ENCODE measurements at regions of chr14 and their contacts with region 1.

Region 1: DNA sequence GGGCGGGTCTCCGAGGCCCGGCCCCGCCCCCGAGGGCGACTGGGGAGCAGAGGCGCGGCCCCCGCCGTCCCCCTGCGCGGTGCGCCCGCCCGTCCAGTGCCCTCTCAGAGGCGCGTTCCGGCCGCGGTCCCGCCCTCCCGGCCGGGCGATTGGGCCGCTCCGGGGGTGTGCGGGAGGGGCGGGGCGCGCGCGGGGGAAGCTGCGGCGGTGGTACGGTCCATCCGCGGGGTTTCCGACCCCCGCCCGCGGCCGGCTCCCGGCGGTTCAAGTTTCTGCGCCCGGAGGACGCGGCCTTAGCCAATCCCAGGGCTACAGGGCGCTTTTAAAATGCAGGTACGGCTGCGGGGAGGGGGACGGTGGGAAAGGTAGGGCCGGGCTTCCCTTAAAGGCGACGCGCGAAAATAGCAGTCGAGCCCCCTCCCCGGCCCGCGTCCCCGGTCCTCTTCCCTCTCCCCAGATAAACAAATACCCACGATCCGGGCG is 317 bp upstream of the CCDC85C start:
- DNase-seq: peak; percentile 91 to 95
- ATAC-seq: peak; percentile 75 to 88
- H3K4me3 ChIP-seq: peak overlapping the region; percentile 81
- H3K27ac ChIP-seq: peak overlapping the region; percentile 87 to 99
- H3K4me1 ChIP-seq: peaks cover 47% of the 10 kb centered on the region
- CTCF ChIP-seq: no peak
- EP300 ChIP-seq: no peak
- POLR2A ChIP-seq: no peak
- RAD21 ChIP-seq: no peak

Region 2: GRCh38 chr14:99497894-99498293 is 106.4 kb before region 1 on chr14:
- CTCF ChIA-PET with region 1: no interaction called
- POLR2A ChIA-PET with region 1: no interaction called
- DNase-seq: no peak
- ATAC-seq: no peak
- H3K4me3 ChIP-seq: no peak overlapping the region
- H3K27ac ChIP-seq: no peak overlapping the region
- H3K4me1 ChIP-seq: no peaks in the 10 kb centered on the region
- CTCF ChIP-seq: no peak
- EP300 ChIP-seq: no peak
- POLR2A ChIP-seq: no peak
- RAD21 ChIP-seq: no peak

Region 3: DNA sequence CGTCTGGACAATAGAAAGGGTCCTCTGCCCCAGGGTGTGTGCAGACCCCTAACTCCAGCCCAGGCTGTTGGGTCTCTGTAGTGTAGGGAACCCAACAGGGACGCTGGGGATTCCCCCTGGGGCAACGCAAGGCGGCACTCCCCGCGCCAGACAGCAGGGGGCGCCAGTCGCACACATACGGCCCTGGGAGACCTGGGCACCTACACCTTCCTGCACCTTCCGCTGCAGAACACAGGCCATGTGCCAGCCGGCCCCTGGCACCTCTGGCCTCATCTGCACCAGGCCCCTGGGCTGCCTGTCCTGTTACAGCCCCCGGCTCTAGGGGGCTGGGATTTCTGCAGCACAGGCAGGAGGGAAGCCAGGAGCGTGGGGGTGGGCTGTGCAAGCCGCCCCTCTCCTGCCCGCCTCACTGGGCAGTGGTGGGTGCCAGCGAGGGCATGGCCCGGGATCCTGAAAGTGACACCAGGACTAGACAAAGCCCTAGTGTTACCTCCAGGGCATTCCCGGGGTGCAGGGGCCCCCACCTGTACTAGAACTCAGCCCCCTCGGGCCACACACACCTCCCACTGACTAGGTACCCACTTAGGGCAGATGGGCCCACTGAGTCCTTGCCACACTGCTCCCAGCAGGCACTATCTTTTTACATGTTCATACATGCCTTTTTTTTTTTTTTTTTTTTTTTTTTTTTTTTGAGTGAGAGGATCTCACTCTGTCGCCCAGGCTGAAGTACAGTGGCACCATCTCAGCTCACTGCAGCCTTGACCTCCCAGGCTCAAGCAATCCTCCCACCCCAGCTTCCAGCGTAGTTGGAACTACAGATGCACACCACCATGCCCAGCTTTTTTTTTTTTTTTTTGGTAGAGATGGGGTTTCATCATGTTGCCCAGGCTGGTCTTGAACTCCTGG is 85.6 kb before region 1 on chr14:
- CTCF ChIA-PET with region 1: interaction called, 75 read pairs
- POLR2A ChIA-PET with region 1: interaction called, 3 read pairs
- DNase-seq: peak; percentile 70 to 81
- ATAC-seq: peak; percentile 51 to 70; a peak in 5 of 6 replicates
- H3K4me3 ChIP-seq: no peak overlapping the region
- H3K27ac ChIP-seq: peak overlapping the region; percentile 16 to 58; a peak in 4 of 6 replicates
- H3K4me1 ChIP-seq: peaks cover 25% of the 10 kb centered on the region
- CTCF ChIP-seq: peak; percentile 91
- EP300 ChIP-seq: no peak
- POLR2A ChIP-seq: no peak
- RAD21 ChIP-seq: peak; percentile 96

Region 4: DNA sequence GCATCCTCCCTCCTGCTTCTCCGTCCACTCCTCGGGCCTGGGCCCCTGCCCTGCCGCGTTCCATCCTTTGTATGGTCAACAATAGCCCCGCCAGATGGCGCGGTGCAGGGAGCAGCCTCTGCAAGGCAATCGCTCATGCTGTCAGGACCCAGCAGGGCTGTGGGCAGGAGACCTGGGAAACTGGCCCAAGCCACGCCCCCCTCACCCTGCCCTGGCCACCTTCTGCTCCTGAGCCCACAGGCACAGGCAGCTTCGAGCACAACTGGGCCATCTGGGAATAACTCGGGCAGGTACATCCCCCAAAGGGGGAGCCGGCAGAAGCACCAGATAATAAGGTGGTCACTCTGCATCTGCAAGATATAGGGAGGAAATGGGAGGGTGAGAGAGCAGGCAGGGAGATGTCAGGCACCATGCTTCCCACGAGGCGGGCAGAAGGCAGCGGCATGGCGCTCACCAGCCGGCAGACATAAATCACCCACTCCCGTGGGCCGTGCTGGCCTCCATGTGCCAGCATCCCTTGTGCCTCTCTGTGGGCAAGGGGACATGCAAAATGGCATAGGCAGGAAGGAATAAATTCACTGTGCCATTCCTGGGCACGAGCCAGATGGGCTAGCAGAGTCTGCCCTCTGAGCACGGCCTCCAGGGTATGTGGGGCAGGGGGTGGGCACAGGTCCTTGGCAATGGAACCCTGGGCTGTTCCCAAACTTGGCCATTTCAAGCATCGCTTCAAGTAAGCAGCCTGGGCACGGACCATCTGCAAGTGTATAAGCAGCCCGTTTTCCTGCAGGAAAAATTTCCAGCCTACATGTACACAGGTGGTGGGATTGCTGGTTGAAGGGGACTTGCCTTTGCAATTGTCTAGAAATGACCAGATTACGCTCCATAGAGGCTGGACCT is 40.8 kb before region 1 on chr14:
- CTCF ChIA-PET with region 1: interaction called, 96 read pairs
- POLR2A ChIA-PET with region 1: no interaction called
- DNase-seq: peak; percentile 76 to 86
- ATAC-seq: peak; percentile 93 to 98
- H3K4me3 ChIP-seq: no peak overlapping the region
- H3K27ac ChIP-seq: peak overlapping the region; percentile 37 to 92; a peak in 4 of 6 replicates
- H3K4me1 ChIP-seq: peaks cover 72% of the 10 kb centered on the region
- CTCF ChIP-seq: peak; percentile 67
- EP300 ChIP-seq: no peak
- POLR2A ChIP-seq: no peak
- RAD21 ChIP-seq: peak; percentile 74 to 81

Region 5: GRCh38 chr14:99619835-99620834 is 15.8 kb after region 1 on chr14:
- CTCF ChIA-PET with region 1: interaction called, 31 read pairs
- POLR2A ChIA-PET with region 1: no interaction called
- DNase-seq: no peak
- ATAC-seq: no peak
- H3K4me3 ChIP-seq: no peak overlapping the region
- H3K27ac ChIP-seq: no peak overlapping the region
- H3K4me1 ChIP-seq: no peaks in the 10 kb centered on the region
- CTCF ChIP-seq: no peak
- EP300 ChIP-seq: no peak
- POLR2A ChIP-seq: no peak
- RAD21 ChIP-seq: no peak

Measured in A549 (cell line).